ENCODE measurements at regions of chr7 and their contacts with region 1.

Region 1: DNA sequence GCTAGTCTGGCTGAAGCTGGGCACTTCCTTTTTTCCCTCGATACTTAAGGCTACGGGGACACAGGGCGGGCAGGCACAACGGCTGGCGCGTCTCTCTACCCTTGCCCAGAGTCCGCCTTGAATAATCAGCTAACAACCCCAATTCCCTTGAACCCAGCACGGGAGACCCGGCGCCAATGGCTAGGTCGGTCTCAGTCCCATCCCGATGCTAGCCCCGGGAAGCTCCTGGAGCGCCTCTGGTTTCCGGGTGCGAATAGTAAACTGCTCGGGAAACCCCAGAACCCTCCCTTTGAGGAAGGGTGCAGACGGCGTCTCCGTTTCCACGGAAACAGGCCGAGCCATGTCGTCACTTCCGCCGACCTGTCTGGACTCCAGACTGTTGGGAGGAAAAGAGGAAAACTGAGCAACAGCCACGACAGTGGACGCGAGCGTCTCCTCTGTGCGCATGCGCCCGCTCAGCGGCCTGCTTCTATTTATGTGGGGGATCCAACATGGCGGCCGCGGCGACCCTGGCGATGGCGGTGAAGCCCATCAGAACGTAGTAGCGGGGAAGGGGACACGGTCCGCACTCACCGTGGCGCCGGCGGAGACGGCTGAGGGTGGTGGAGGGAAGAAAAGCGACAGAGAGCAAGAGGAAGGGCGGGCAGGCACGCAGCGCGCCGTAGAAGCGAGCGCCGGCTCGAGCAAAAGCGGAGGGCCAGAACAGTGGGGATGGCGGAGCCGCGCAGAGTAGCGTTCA is at the start of gene UBN2:
- DNase-seq: peak; percentile 89
- ATAC-seq: peak; percentile 85
- H3K4me3 Mint-ChIP-seq: peak within 1 kb of the TSS; percentile 98
- H3K27ac Mint-ChIP-seq: peak within 1 kb of the TSS; percentile 96
- H3K4me1 Mint-ChIP-seq: peaks cover 20% of the 10 kb centered on the region
- H3K27me3 Mint-ChIP-seq: no peaks in the 10 kb centered on the region
- CTCF ChIP-seq: no peak
- total RNA-seq, gene UBN2: 19.5 and 21.0 TPM in 2 replicates

Region 2: GRCh38 chr7:138002096-138002827 is 1228.7 kb before region 1 on chr7:
- CTCF ChIA-PET with region 1: no interaction called
- POLR2A ChIA-PET with region 1: no interaction called
- intact Hi-C with region 1: loop called (anchors 5 kb)
- DNase-seq: peak; percentile 93
- ATAC-seq: peak; percentile 90
- H3K4me3 Mint-ChIP-seq: peak overlapping the region; percentile 98
- H3K27ac Mint-ChIP-seq: peak overlapping the region; percentile 90
- H3K4me1 Mint-ChIP-seq: peaks cover 37% of the 10 kb centered on the region
- H3K27me3 Mint-ChIP-seq: no peaks in the 10 kb centered on the region
- CTCF ChIP-seq: peak; percentile 94

Region 3: GRCh38 chr7:139016931-139017511 is 213.9 kb before region 1 on chr7:
- CTCF ChIA-PET with region 1: no interaction called
- POLR2A ChIA-PET with region 1: no interaction called
- intact Hi-C with region 1: loop called (anchors 2 kb)
- DNase-seq: no peak
- ATAC-seq: peak; percentile 71
- H3K4me3 Mint-ChIP-seq: no peak overlapping the region
- H3K27ac Mint-ChIP-seq: no peak overlapping the region
- H3K4me1 Mint-ChIP-seq: peaks cover 2% of the 10 kb centered on the region
- H3K27me3 Mint-ChIP-seq: peaks cover 9% of the 10 kb centered on the region
- CTCF ChIP-seq: no peak

Region 4: GRCh38 chr7:139035586-139036353 is 195.2 kb before region 1 on chr7 and contains the start of gene ZC3HAV1L:
- CTCF ChIA-PET with region 1: no interaction called
- POLR2A ChIA-PET with region 1: no interaction called
- intact Hi-C with region 1: no loop called
- DNase-seq: peak; percentile 34
- ATAC-seq: peak; percentile 73
- H3K4me3 Mint-ChIP-seq: peak within 1 kb of the TSS; percentile 81
- H3K27ac Mint-ChIP-seq: no peak within 1 kb of the TSS
- H3K4me1 Mint-ChIP-seq: peaks cover 10% of the 10 kb centered on the region
- H3K27me3 Mint-ChIP-seq: no peaks in the 10 kb centered on the region
- CTCF ChIP-seq: no peak
- total RNA-seq, gene ZC3HAV1L: 1.6 and 1.8 TPM in 2 replicates

Region 5: DNA sequence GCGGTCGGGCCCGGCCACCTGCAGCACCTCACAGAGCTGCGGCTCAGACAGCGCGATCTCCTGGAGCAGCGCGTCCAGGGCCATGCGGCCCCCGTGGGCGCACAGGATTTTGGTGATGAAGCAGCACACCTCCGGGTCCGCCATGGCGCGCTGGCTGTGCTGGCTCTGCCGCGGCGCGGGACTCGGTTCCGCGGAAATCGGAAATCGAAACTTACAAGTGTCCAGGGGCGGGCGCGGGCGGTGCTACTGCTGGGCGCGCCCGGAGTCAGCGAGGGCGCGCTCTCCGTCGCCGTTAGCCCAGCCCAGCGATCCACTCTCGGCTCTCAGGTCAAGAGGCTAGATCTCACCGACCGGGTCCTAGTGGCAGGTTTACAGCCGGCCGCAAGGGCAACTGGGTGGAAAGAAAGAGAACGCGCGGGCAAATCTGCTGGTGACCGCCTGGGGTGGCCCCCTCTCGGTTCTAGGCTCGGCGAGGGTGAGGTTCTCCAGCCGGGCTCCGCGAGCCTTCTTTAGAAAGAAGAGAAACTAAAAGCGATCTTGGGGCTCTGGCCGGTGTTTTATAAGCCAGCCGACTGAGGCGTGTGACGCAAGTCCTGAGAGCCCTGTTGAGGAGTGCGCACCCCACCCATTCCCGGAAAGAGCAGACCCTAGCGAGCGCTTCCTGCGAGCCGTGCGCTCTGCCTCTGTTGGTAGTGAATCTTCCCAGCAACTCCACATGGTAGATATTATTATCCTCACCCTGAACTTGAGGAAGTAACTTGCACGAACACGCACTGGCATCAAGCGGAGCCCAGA is 121.6 kb before region 1 on chr7 and contains the start of gene ZC3HAV1:
- CTCF ChIA-PET with region 1: no interaction called
- POLR2A ChIA-PET with region 1: interaction called, 3 read pairs
- intact Hi-C with region 1: loop called (anchors 1 kb)
- DNase-seq: peak; percentile 73
- ATAC-seq: peak; percentile 76
- H3K4me3 Mint-ChIP-seq: peak within 1 kb of the TSS; percentile 90
- H3K27ac Mint-ChIP-seq: peak within 1 kb of the TSS; percentile 97
- H3K4me1 Mint-ChIP-seq: peaks cover 44% of the 10 kb centered on the region
- H3K27me3 Mint-ChIP-seq: no peaks in the 10 kb centered on the region
- CTCF ChIP-seq: no peak
- total RNA-seq, gene ZC3HAV1: 76.3 and 80.7 TPM in 2 replicates

Region 6: GRCh38 chr7:139133335-139134139 is 97.4 kb before region 1 on chr7:
- CTCF ChIA-PET with region 1: no interaction called
- POLR2A ChIA-PET with region 1: interaction called, 9 read pairs
- intact Hi-C with region 1: loop called (anchors 1 kb)
- DNase-seq: peak; percentile 77
- ATAC-seq: peak; percentile 98
- H3K4me3 Mint-ChIP-seq: peak overlapping the region; percentile 87
- H3K27ac Mint-ChIP-seq: peak overlapping the region; percentile 81
- H3K4me1 Mint-ChIP-seq: peaks cover 9% of the 10 kb centered on the region
- H3K27me3 Mint-ChIP-seq: no peaks in the 10 kb centered on the region
- CTCF ChIP-seq: no peak

Region 7: GRCh38 chr7:139351027-139351426 is 120.1 kb after region 1 on chr7:
- CTCF ChIA-PET with region 1: no interaction called
- POLR2A ChIA-PET with region 1: no interaction called
- intact Hi-C with region 1: no loop called
- DNase-seq: no peak
- ATAC-seq: no peak
- H3K4me3 Mint-ChIP-seq: no peak overlapping the region
- H3K27ac Mint-ChIP-seq: no peak overlapping the region
- H3K4me1 Mint-ChIP-seq: no peaks in the 10 kb centered on the region
- H3K27me3 Mint-ChIP-seq: no peaks in the 10 kb centered on the region
- CTCF ChIP-seq: no peak